CD4-positive, alpha-beta memory T cell (primary cell): ENCODE measurements at regions of chr7 and their contacts with region 1.

Region 1: DNA sequence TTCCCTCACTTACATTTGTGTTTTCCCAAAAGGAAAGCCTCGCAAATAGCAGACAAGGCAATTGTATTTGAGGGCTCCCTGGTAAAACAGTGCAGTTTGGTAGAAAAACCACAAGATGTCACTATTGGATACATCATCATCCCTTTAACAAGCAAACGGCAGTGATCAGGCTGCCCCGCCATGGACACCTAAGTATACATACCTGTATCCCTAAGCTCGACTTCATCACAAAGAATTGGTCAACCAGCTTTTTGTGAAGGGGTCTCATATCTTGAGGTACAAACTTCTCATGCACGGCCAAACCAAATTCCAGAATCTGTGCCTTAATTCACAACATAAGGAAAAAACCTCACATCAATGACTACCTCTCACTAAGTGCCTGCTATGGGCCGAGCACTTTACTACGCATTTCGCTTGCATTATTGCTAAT is 179.5 kb upstream of the IMMP2L start:
- DNase-seq: peak in 4 of 5 donors; percentile 40 to 44 (median 42)
- H3K4me3 ChIP-seq: no peak overlapping the region
- H3K4me3 Mint-ChIP-seq: no peak overlapping the region
- H3K27ac ChIP-seq: no peak overlapping the region
- H3K27ac Mint-ChIP-seq: no peak overlapping the region
- H3K4me1 ChIP-seq: no peaks in the 10 kb centered on the region
- H3K4me1 Mint-ChIP-seq: peaks cover 0 to 2% (median under 1%) of the 10 kb centered on the region in 4 donors
- H3K27me3 ChIP-seq: no peaks in the 10 kb centered on the region
- H3K27me3 Mint-ChIP-seq: peaks cover 7 to 14% of the 10 kb centered on the region in 2 donors

Region 2: GRCh38 chr7:111752022-111752582 is 10.3 kb after region 1 on chr7:
- CTCF ChIA-PET with region 1: interaction called, 20 read pairs
- POLR2A ChIA-PET with region 1: no interaction called
- intact Hi-C with region 1: no loop called
- DNase-seq: peak; percentile 35 to 53 (median 45)
- H3K4me3 ChIP-seq: no peak overlapping the region
- H3K4me3 Mint-ChIP-seq: no peak overlapping the region
- H3K27ac ChIP-seq: no peak overlapping the region
- H3K27ac Mint-ChIP-seq: no peak overlapping the region
- H3K4me1 ChIP-seq: no peaks in the 10 kb centered on the region
- H3K4me1 Mint-ChIP-seq: no peaks in the 10 kb centered on the region
- H3K27me3 ChIP-seq: no peaks in the 10 kb centered on the region
- H3K27me3 Mint-ChIP-seq: peaks cover 6 to 9% of the 10 kb centered on the region in 2 donors

Region 3: DNA sequence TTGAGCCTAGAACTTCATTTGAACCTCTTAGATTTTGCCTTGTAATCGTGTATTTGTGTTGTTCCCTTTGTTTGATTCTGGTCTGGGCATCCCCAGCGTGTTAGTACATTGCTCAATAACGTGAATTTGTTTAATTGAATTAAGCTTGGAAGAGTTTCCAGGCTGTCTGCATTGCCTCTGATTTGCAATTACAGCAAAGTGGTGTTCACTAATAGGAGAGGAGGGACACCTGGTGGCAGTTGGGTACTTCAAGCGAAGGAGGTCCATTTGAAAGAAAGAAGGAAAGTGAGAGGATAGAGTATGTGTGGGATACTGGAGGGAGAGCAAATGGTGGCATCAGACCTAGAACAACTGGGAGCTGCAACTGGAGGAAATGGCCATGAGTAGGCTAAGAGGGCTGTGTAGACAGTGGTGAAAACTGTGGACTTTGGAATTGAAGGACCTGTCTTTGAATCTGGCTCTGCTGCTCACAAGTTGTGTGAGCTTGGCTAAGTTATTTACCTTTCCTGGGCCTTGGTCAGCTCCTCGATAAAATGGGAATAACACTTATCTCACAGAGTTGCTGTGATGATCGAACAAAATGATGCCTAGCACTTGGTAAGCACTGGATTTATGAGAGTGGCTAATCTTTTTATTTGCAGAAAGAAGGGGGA is 754.1 kb after region 1 on chr7:
- CTCF ChIA-PET with region 1: interaction called, 13 read pairs
- POLR2A ChIA-PET with region 1: no interaction called
- intact Hi-C with region 1: loop called (anchors 1 kb)
- DNase-seq: peak in 4 of 5 donors; percentile 7 to 22 (median 20)
- H3K4me3 ChIP-seq: no peak overlapping the region
- H3K4me3 Mint-ChIP-seq: no peak overlapping the region
- H3K27ac ChIP-seq: no peak overlapping the region
- H3K27ac Mint-ChIP-seq: no peak overlapping the region
- H3K4me1 ChIP-seq: no peaks in the 10 kb centered on the region
- H3K4me1 Mint-ChIP-seq: peaks cover 0 to 2% (median 0%) of the 10 kb centered on the region in 4 donors
- H3K27me3 ChIP-seq: no peaks in the 10 kb centered on the region
- H3K27me3 Mint-ChIP-seq: peaks cover 1 to 3% of the 10 kb centered on the region in 2 donors

Region 4: GRCh38 chr7:112610636-112611035 is 868.8 kb after region 1 on chr7:
- CTCF ChIA-PET with region 1: no interaction called
- POLR2A ChIA-PET with region 1: no interaction called
- intact Hi-C with region 1: no loop called
- DNase-seq: no peak
- H3K4me3 ChIP-seq: no peak overlapping the region
- H3K4me3 Mint-ChIP-seq: no peak overlapping the region
- H3K27ac ChIP-seq: no peak overlapping the region
- H3K27ac Mint-ChIP-seq: no peak overlapping the region
- H3K4me1 ChIP-seq: no peaks in the 10 kb centered on the region
- H3K4me1 Mint-ChIP-seq: no peaks in the 10 kb centered on the region
- H3K27me3 ChIP-seq: no peaks in the 10 kb centered on the region
- H3K27me3 Mint-ChIP-seq: peaks cover 10 to 12% of the 10 kb centered on the region in 2 donors

Region 5: GRCh38 chr7:113421696-113422330 is 1680.0 kb after region 1 on chr7:
- CTCF ChIA-PET with region 1: interaction called, 11 read pairs
- POLR2A ChIA-PET with region 1: no interaction called
- intact Hi-C with region 1: no loop called
- DNase-seq: peak; percentile 62 to 72 (median 68)
- H3K4me3 ChIP-seq: no peak overlapping the region
- H3K4me3 Mint-ChIP-seq: peak overlapping the region in 4 of 8 donors; percentile 46 to 78 (median 64)
- H3K27ac ChIP-seq: no peak overlapping the region
- H3K27ac Mint-ChIP-seq: peak overlapping the region in 2 of 7 donors; percentile 43 to 64
- H3K4me1 ChIP-seq: peaks cover 3% of the 10 kb centered on the region
- H3K4me1 Mint-ChIP-seq: peaks cover 3 to 5% (median 4%) of the 10 kb centered on the region in 4 donors
- H3K27me3 ChIP-seq: no peaks in the 10 kb centered on the region
- H3K27me3 Mint-ChIP-seq: peaks cover 0 to 2% of the 10 kb centered on the region in 2 donors